ENCODE measurements at regions of chr5 and their contacts with region 1.

Region 1: DNA sequence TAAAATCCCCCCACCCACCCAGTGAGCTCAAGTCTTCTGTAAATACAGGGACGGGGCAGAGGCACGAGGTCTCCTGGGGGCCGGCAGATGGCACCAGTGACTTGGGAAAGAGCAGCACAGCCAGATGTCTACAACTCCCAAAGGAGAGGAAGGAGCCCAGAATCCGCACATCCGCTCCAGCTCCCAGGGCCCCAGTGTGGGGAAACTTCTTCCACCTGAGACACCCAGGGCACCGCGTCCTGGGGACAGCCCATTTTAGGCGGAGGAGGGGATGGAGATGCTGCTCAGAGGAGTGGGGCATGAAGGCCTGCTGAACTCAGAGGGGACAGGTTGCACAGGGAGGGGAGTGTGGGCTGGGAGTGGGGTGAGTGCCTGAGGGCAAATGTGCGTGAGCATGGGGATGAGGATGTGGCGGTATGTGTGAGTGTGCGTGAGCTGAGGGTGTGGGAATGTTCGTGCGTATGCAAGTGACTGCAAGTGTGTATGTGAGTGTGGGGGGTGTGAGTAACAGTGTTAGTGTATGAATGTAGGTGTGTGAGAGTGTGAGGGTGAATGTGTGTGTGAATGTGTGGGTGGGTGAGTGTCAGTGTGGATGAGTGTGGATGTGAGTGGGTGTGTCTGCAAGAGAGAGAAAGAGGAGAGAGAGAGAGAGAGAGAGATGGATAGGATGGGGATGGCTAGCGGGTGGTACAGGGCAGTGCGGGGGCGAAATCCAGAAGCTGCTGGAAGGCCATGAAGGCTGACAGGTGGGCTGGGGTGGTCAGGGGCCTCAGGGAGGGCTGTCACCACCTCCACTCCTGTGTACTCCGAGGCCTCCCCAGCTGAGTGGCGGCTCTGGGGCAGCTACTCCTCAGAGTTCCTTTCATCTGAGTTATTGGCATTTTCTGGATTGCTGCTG is 63.5 kb downstream of the DUSP1 start:
- DNase-seq: peak in 2 of 4 experiments; percentile 37 to 68
- ATAC-seq: peak; percentile 90
- H3K4me3 ChIP-seq: no peak overlapping the region
- H3K27ac ChIP-seq: no peak overlapping the region
- H3K4me1 ChIP-seq: peaks cover 4 to 9% of the 10 kb centered on the region in 2 experiments; a peak in 3 of 5 replicates
- H3K27me3 ChIP-seq: peaks cover 2 to 33% of the 10 kb centered on the region in 2 experiments; a peak in 4 of 5 replicates
- CTCF ChIP-seq: peak; percentile 67 to 79 (median 72)
- EP300 ChIP-seq: no peak
- POLR2A ChIP-seq: no peak
- RAD21 ChIP-seq: peak; percentile 62 to 78

Region 2: GRCh38 chr5:173278172-173278571 is 570.6 kb after region 1 on chr5:
- CTCF ChIA-PET with region 1: interaction called, 3 read pairs
- POLR2A ChIA-PET with region 1: no interaction called
- in situ Hi-C with region 1: loop called (anchors 10 kb)
- intact Hi-C with region 1: loop called (anchors 5 kb)
- DNase-seq: no peak
- ATAC-seq: no peak
- H3K4me3 ChIP-seq: no peak overlapping the region
- H3K27ac ChIP-seq: no peak overlapping the region
- H3K4me1 ChIP-seq: peaks cover 0 to 3% of the 10 kb centered on the region in 2 experiments; a peak in 1 of 5 replicates
- H3K27me3 ChIP-seq: peaks cover 6 to 17% of the 10 kb centered on the region in 2 experiments; a peak in 4 of 5 replicates
- CTCF ChIP-seq: no peak
- EP300 ChIP-seq: no peak
- POLR2A ChIP-seq: no peak
- RAD21 ChIP-seq: no peak

Measured in K562 (cell line).